MCF 10A (cell line): ENCODE measurements at regions of chr1 and their contacts with region 1.

Region 1: DNA sequence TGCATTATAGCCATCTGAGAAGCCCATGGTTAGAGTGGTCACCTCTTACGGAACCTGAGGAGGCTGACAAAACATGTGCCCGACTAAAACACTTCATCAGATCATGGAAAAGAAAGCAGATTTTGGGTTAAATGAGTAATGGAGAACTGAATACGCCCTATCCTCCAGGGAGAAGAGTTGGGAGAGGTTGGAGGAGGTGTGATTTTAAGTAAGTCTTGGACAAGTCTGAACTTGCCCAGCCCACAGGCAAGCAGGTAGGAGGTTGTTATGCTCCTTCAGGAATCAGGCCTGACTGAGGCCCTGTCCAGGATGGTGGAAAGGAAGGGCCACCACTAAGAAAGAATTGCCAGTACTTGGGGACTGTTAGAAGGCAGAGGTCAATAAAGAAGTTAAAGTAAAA is 255.8 kb downstream of the TGFB2 start:
- DNase-seq: peak; percentile 92
- H3K4me3 Mint-ChIP-seq: no peak overlapping the region
- H3K27ac Mint-ChIP-seq: peak overlapping the region; percentile 97
- H3K4me1 Mint-ChIP-seq: peaks cover 21% of the 10 kb centered on the region
- H3K27me3 Mint-ChIP-seq: no peaks in the 10 kb centered on the region
- CTCF ChIP-seq: no peak

Region 2: GRCh38 chr1:218613110-218613509 is 12.1 kb after region 1 on chr1:
- CTCF ChIA-PET with region 1: interaction called, 3 read pairs
- POLR2A ChIA-PET with region 1: interaction called, 13 read pairs
- intact Hi-C with region 1: no loop called
- DNase-seq: peak; percentile 50
- H3K4me3 Mint-ChIP-seq: no peak overlapping the region
- H3K27ac Mint-ChIP-seq: no peak overlapping the region
- H3K4me1 Mint-ChIP-seq: peaks cover 37% of the 10 kb centered on the region
- H3K27me3 Mint-ChIP-seq: no peaks in the 10 kb centered on the region
- CTCF ChIP-seq: no peak